ENCODE measurements at regions of chr12 and their contacts with region 1.

Region 1: GRCh38 chr12:57529816-57530215 is 7.2 kb downstream of the MBD6 start:
- DNase-seq: no peak
- CTCF ChIP-seq: no peak

Region 2: DNA sequence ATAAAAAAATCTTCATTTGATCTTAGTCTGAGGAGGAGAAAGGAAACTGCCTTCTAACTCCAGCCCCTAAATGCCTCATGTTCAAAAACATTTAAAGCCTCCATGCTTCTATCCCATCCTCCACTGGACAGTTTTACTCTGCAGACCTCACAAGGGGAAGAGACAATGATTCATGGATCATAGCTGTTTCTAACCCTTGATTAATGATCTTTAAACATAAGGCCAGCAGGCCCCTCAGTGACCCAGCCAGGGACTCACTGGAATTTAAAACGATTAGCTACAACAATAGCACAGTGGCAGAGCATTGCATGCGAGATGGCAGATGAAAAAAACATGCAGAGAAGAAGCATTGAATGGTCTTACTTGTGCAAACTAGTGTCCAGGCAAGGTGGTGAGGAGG is 11.2 kb after region 1 on chr12:
- CTCF ChIA-PET with region 1: interaction called, 13 read pairs
- POLR2A ChIA-PET with region 1: no interaction called
- DNase-seq: no peak
- CTCF ChIP-seq: no peak

Region 3: DNA sequence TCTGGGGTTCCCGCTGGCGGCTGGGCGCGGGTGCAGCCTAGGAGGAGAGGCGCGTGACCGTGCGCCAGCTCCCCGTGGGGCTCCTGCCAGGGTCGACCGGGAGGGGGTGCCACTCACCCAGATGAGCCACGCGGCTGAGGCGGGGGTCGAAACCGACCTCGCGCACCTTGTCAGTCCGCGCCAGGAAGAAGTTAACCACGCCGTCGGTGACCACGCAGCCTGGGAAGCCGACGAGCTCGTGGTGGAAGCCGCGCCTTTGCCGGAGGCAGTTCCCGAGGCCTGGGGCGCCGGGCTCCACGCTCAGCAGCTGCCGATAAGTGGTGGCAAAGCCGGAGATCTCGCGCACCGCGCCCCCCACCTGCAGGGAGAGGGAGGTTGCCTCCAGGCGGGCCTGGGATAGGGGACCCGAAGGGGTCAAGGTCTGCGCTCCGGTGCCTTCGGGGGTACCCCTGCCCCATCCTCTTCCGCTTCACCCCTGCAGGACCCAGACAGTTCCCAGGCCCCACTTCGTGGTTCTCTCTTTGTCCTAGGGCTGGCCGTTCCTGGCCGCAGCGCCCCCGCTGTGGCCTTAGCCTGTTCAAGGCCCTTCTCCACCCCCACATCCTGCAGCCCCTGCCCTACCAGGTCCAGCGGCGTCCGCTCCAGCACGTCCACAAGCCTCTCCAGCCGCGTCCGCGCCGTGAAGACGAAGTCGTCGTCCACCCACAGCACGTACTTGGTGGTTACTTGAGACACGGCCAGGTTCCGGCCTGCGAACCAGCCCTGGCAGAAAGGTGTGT is 97.9 kb after region 1 on chr12:
- CTCF ChIA-PET with region 1: no interaction called
- POLR2A ChIA-PET with region 1: no interaction called
- DNase-seq: no peak
- CTCF ChIP-seq: peak; percentile 30

Measured in GM10248 (cell line).